Activated T-helper 1 cell treated with anti-CD3 and anti-CD28 coated beads, Interleukin-12 subunit alpha, Interleukin-12 subunit beta, Interleukin-2, Interleukin-4 antibody, amounts not matched to agents 30 ng/mL and 10 ng/mL and 1 ng/mL, durations not matched to agents 14 hours and 24 hours and 36 hours (primary cell): ENCODE measurements at regions of chr6 and their contacts with region 1.

Region 1: DNA sequence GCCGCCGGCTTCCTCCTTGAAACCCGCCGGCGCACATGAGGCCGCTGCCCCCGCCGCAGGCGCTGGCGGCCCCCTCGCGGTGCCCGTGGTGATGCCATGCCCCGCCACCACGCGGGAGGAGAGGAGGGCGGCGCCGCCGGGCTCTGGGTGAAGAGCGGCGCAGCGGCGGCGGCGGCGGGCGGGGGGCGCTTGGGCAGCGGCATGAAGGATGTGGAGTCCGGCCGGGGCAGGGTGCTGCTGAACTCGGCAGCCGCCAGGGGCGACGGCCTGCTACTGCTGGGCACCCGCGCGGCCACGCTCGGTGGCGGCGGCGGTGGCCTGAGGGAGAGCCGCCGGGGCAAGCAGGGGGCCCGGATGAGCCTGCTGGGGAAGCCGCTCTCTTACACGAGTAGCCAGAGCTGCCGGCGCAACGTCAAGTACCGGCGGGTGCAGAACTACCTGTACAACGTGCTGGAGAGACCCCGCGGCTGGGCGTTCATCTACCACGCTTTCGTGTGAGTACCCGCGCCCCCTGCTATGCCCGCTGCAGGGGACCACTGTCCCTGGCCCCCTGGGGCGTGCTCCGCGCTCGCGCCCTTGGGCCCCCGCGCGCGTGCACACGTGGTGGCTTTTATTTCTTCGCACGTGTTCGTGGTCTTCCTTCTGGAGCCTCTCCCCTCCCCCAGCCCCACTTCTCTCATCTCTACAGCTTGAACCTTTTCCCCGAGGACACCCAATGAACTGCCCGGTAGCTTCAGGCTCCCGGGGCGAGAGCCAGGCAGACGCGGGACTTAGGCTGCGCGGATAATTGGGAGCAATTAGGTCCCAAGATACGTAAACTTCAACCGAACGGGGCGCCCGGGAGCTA is 453 bp downstream of the KCNQ5 start:
- DNase-seq: peak; percentile 31
- H3K4me3 Mint-ChIP-seq: peak overlapping the region; percentile 96
- H3K27ac Mint-ChIP-seq: peak overlapping the region; percentile 94
- H3K4me1 Mint-ChIP-seq: peaks cover 60% of the 10 kb centered on the region
- H3K27me3 Mint-ChIP-seq: peaks cover 5% of the 10 kb centered on the region

Region 2: DNA sequence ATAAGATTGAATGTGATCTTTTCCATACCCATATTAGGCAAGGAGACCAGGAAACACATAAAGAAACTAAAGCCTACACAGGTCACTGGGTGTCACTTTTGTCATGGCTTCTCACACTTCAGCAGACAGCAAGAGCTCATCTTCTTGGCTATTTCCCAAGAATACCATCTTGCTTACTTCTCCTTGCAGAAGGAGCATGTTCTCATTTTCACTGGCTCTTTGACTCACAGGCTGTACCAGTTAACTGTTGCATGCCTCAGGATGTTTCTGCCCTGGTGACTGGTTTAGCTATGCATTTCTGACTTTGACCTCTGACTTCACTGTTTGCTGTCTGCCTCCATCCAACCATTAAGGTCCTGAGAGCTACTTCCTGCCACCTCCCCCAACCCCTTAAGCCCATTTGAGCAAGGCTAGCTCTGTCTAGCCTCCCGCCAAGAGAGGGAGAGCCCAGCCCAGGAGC is 1374.0 kb before region 1 on chr6:
- intact Hi-C with region 1: no loop called
- DNase-seq: no peak
- H3K4me3 Mint-ChIP-seq: no peak overlapping the region
- H3K27ac Mint-ChIP-seq: no peak overlapping the region
- H3K4me1 Mint-ChIP-seq: no peaks in the 10 kb centered on the region
- H3K27me3 Mint-ChIP-seq: peaks cover 4% of the 10 kb centered on the region

Region 3: GRCh38 chr6:72683797-72684196 is 61.5 kb after region 1 on chr6:
- intact Hi-C with region 1: loop called (anchors 1 kb)
- DNase-seq: no peak
- H3K4me3 Mint-ChIP-seq: no peak overlapping the region
- H3K27ac Mint-ChIP-seq: peak overlapping the region; percentile 14
- H3K4me1 Mint-ChIP-seq: peaks cover 8% of the 10 kb centered on the region
- H3K27me3 Mint-ChIP-seq: no peaks in the 10 kb centered on the region

Region 4: DNA sequence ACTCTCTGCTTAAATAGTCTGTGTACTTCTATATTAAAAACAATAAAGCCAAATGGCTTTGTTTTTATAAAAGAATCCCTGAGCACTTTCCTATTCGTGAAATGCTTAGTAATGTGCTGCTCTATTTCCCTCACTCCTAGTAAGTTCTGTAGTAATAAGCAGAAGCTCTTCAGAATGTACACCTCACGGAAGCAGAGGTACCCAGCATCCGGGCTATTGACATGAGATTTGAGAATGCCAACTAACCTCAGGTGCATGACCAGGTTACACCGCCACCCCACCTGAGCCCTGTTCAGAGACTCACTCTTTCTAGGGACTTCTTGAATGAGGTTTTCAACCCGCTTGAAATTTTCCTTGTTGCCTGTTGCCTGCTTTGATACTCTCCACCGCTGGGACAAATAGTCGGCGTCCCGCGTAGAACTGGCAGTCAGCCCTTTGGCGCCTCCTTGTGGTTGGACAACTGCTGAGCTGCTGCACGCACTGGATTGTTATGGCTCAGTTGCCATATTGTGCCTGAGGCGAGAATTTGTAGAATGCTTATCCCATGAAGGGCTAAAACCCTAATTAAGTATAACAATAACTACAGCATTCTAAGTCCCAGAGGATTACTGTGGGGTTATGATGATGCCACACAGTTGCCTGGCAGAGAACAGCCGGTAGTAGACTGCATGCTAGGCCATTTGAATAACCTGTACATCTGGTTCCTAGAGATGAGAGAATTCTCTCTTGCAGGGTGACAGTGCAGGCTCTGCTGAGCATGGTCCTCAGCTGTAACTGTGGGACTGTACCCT is 507.5 kb after region 1 on chr6:
- intact Hi-C with region 1: loop called (anchors 1 kb)
- DNase-seq: peak; percentile 71
- H3K4me3 Mint-ChIP-seq: no peak overlapping the region
- H3K27ac Mint-ChIP-seq: no peak overlapping the region
- H3K4me1 Mint-ChIP-seq: peaks cover 5% of the 10 kb centered on the region
- H3K27me3 Mint-ChIP-seq: peaks cover 13% of the 10 kb centered on the region

Region 5: GRCh38 chr6:73329201-73329600 is 706.9 kb after region 1 on chr6:
- intact Hi-C with region 1: loop called (anchors 5 kb)
- DNase-seq: no peak
- H3K4me3 Mint-ChIP-seq: no peak overlapping the region
- H3K27ac Mint-ChIP-seq: no peak overlapping the region
- H3K4me1 Mint-ChIP-seq: peaks cover 7% of the 10 kb centered on the region
- H3K27me3 Mint-ChIP-seq: peaks cover 24% of the 10 kb centered on the region

Region 6: DNA sequence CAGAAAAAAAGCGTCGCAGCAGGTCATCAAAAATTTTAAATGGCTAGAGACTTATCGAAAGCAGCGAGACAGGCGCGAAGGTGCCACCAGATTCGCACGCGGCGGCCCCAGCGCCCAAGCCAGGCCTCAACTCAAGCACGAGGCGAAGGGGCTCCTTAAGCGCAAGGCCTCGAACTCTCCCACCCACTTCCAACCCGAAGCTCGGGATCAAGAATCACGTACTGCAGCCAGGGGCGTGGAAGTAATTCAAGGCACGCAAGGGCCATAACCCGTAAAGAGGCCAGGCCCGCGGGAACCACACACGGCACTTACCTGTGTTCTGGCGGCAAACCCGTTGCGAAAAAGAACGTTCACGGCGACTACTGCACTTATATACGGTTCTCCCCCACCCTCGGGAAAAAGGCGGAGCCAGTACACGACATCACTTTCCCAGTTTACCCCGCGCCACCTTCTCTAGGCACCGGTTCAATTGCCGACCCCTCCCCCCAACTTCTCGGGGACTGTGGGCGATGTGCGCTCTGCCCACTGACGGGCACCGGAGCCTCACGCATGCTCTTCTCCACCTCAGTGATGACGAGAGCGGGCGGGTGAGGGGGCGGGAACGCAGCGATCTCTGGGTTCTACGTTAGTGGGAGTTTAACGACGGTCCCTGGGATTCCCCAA is 898.5 kb after region 1 on chr6 and contains the start of gene EEF1A1:
- intact Hi-C with region 1: loop called (anchors 1 kb)
- DNase-seq: peak; percentile 98
- H3K4me3 Mint-ChIP-seq: peak within 1 kb of the TSS; percentile 88
- H3K27ac Mint-ChIP-seq: peak within 1 kb of the TSS; percentile 100
- H3K4me1 Mint-ChIP-seq: peaks cover 28% of the 10 kb centered on the region
- H3K27me3 Mint-ChIP-seq: peaks cover 5% of the 10 kb centered on the region
- total RNA-seq, gene EEF1A1: 8,439 and 8,694 TPM in 2 replicates

Region 7: DNA sequence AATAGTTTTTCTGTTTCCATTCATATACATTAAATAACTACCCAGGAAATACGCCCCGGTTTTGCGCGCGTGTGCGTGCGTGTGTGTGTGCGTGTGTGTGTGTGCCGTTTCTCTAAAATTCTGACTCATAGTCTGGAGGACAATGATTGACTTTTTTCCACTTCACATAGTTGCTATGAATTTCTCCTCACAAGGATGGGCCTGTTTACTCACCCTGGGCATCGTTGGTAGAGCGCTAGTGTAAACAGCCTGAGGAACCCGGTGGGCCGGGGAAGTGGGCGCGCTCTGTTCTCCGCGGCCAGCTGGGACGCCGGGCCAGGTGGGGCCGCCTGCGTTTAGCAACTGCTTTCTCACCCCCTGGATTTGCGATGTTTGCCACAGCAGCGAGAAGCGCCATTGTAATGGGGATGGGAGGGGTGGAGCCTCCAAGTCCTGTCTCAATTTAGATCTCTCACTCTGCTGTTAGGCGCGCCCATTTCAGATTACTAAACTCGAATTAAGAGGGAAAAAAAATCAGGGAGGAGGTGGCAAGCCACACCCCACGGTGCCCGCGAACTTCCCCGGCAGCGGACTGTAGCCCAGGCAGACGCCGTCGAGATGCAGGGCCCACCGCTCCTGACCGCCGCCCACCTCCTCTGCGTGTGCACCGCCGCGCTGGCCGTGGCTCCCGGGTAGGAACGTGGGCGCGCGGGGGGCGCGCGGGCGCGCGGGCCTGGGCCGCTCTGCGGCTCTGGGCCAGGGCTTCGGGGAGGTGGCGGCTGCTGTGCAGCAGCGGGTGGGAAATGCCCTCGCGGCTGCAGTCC is 1073.5 kb after region 1 on chr6 and contains the start of gene CD109:
- intact Hi-C with region 1: loop called (anchors 1 kb)
- DNase-seq: peak; percentile 61
- H3K4me3 Mint-ChIP-seq: peak within 1 kb of the TSS; percentile 88
- H3K27ac Mint-ChIP-seq: peak within 1 kb of the TSS; percentile 95
- H3K4me1 Mint-ChIP-seq: peaks cover 62% of the 10 kb centered on the region
- H3K27me3 Mint-ChIP-seq: peaks cover 4% of the 10 kb centered on the region
- total RNA-seq, gene CD109: 27.1 and 29.3 TPM in 2 replicates